ENCODE measurements at regions of chr17 and their contacts with region 1.

Region 1: GRCh38 chr17:39648616-39649366 is 11.8 kb downstream of the STARD3 start:
- DNase-seq: no peak
- ATAC-seq: no peak

Region 2: DNA sequence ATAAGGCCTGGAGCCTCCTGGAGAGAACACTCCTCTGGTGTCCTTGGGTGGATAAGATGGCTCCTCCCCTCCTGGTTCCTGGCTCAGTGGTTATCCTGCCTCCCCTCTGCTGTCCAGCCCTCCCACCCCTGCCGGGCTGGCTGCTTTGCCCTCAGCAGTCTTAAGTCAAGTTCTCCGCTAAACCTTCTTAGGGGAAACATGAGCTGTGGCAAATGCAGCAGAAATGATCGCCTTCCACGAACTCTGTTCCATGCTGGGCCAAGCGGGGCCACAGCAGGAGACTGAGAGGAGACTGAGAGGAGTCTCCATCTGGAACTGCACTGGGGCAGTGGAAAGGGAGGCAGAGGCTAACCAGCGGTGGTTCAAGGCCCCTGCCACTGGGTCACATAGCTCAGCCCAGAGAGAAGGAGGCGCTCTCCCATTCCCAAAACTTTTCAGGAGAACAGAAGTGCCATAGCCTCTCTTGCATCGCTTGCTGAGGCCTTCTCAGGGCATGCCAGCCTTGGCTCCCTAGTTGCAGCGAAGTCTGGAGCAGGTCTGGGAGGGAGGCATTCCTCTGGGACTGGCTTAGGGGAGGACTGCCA is 825.7 kb after region 1 on chr17:
- intact Hi-C with region 1: loop called (anchors 5 kb)
- DNase-seq: no peak
- ATAC-seq: no peak